BJ (cell line): ENCODE measurements at regions of chr19 and their contacts with region 1.

Region 1: GRCh38 chr19:11737964-11738745 is 591 bp downstream of the ZNF823 start:
- DNase-seq: no peak
- H3K4me3 ChIP-seq: peak overlapping the region; percentile 58
- H3K27me3 ChIP-seq: no peaks in the 10 kb centered on the region
- CTCF ChIP-seq: 0 out of 2 replicates have a peak, but pooled peaks have one; percentile 3

Region 2: DNA sequence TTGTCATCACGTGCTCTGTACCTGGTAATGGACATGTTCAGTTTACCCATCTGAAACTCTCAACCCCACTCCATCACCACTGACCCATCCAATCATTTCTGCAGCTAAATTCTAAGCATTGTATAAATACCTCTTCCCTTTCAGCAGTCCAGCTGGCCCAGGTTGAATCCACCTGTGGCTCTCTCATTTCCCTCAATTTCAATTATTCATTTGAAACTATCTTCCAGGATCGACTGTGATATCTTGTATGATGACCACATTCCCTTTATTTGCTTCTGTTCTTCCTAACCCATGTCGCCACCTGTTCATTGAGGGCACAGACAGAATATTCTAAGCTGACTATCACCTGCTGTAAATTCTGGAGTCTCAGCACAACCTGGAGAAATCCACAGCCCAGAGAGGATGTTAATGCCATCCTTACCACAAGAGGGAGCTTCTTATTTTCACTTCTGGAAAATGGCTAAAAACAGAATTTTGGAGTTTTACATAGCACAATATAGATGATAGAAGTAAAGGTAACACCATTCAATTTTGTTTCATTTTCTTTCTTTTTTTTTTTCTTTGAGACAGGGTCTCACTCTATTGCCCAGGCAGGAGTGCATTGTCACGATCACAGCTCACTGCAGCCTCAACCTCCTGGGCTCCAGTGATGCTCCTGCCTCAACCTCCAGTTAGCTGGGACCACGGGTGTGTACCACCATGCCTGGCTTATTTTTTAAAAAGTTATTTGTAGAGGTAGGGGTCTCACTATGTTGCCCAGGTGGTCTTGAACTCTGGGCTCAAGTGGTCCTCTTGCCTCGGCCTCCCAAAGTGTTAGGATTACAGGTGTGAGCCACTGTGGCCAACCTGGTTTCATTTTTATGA is 38.0 kb before region 1 on chr19:
- CTCF ChIA-PET with region 1: interaction called, 12 read pairs
- POLR2A ChIA-PET with region 1: no interaction called
- DNase-seq: no peak
- H3K4me3 ChIP-seq: no peak overlapping the region
- H3K27me3 ChIP-seq: no peaks in the 10 kb centered on the region; the same call in none of the 2 replicates
- CTCF ChIP-seq: peak; percentile 73

Region 3: GRCh38 chr19:11721681-11722080 is 16.5 kb before region 1 on chr19:
- CTCF ChIA-PET with region 1: no interaction called
- POLR2A ChIA-PET with region 1: no interaction called
- DNase-seq: no peak
- H3K4me3 ChIP-seq: no peak overlapping the region
- H3K27me3 ChIP-seq: no peaks in the 10 kb centered on the region
- CTCF ChIP-seq: no peak

Region 4: DNA sequence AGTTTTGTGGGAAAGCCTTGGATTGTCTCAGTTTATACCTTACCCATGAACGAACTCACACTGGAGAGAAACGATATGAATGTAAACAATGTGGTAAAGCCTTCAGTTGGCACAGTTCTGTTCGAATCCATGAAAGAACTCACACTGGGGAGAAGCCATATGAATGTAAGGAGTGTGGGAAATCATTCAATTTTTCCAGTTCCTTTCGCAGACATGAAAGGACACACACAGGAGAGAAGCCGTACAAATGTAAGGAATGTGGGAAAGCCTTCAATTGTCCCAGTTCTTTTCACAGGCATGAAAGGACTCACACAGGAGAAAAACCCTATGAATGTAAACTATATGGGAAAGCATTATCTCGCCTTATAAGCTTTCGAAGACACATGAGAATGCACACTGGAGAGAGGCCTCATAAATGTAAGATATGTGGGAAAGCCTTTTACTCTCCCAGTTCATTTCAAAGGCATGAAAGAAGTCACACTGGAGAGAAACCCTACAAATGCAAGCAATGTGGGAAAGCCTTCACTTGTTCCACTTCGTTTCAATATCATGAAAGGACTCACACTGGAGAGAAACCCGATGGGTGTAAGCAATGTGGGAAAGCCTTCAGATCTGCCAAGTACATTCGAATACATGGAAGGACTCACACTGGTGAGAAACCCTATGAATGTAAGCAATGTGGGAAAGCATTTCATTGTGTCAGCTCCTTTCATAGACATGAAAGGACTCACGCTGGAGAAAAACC is 68.4 kb after region 1 on chr19:
- CTCF ChIA-PET with region 1: no interaction called
- POLR2A ChIA-PET with region 1: no interaction called
- DNase-seq: no peak
- H3K4me3 ChIP-seq: no peak overlapping the region
- H3K27me3 ChIP-seq: no peaks in the 10 kb centered on the region
- CTCF ChIP-seq: no peak